Activated naive CD4-positive, alpha-beta T cell treated with anti-CD3 and anti-CD28 coated beads for 36 hours (primary cell): ENCODE measurements at regions of chr2 and their contacts with region 1.

Region 1: GRCh38 chr2:65576861-65577601 is 144.6 kb upstream of the SPRED2 start:
- DNase-seq: no peak
- H3K4me3 Mint-ChIP-seq: no peak overlapping the region
- H3K27ac Mint-ChIP-seq: no peak overlapping the region
- H3K4me1 Mint-ChIP-seq: peaks cover 2% of the 10 kb centered on the region
- H3K27me3 Mint-ChIP-seq: peaks cover 3% of the 10 kb centered on the region

Region 2: GRCh38 chr2:65186872-65187851 is 389.9 kb before region 1 on chr2:
- CTCF ChIA-PET with region 1: no interaction called
- intact Hi-C with region 1: loop called (anchors 1 kb)
- DNase-seq: peak; percentile 81
- H3K4me3 Mint-ChIP-seq: no peak overlapping the region
- H3K27ac Mint-ChIP-seq: no peak overlapping the region
- H3K4me1 Mint-ChIP-seq: peaks cover 4% of the 10 kb centered on the region
- H3K27me3 Mint-ChIP-seq: peaks cover 5% of the 10 kb centered on the region

Region 3: DNA sequence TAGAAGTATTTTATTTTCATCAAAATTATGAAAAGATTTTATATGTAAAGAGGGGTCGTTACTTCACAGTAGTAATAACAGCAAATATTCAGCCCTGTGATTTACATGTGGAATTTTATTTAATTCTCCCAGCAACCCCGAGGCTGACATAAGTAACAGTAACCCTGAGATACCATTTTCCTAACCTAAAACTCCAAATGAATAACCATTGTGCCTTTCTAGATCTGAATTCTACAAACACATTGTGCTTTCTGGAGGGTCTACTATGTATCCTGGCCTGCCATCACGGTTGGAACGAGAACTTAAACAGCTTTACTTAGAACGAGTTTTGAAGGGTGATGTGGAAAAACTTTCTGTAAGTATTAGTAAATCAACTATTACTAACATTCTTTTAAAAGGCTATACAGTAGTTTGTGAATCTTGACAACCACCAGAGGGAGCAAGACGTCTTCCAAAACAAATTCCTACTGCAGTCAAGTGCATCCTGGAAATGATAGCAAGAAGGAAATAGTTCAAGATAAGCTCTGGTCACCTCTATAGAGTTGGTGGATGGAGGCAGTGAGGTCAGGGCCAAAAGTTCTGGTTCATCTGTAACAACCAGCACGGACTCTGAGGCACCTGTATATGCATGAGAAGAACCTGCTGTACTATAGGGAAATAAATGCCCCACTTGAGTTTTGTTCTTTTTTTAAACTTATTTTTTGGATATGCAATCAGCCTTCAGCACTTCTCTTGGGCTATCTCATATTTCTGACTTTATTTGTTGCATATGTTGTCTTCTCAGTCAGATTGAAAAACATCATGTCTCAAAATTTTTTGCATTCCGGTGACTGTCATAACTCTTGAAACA is 312.0 kb before region 1 on chr2:
- CTCF ChIA-PET with region 1: interaction called, 4 read pairs
- intact Hi-C with region 1: loop called (anchors 1 kb)
- DNase-seq: peak; percentile 27
- H3K4me3 Mint-ChIP-seq: no peak overlapping the region
- H3K27ac Mint-ChIP-seq: no peak overlapping the region
- H3K4me1 Mint-ChIP-seq: no peaks in the 10 kb centered on the region
- H3K27me3 Mint-ChIP-seq: no peaks in the 10 kb centered on the region